ENCODE measurements at regions of chr4 and their contacts with region 1.

Region 1: DNA sequence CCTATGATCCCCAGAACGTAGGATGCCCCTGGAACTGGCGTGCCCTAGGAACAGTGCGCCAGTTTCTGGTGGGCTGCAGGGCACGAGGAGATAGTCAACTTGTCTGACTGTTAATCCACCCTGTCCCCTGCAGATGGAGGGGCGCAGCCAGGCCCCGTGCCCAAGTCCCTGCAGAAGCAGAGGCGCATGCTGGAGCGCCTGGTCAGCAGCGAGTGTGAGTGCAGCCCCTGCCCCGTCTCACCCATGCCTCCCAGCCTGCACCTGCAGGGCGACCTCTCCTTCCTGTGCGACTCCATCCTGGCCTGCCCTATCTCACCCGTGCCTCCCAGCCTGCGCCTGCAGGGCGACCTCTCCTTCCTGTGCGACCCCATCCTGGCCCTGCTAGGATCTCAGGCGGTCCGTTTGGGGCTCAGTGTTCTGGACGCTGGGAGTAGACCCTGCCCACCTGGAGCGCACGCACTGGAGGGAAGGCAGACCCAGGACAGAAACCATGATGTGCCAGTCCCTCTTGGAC is 22.2 kb downstream of the WFS1 start:
- DNase-seq: no peak
- ATAC-seq: no peak

Region 2: DNA sequence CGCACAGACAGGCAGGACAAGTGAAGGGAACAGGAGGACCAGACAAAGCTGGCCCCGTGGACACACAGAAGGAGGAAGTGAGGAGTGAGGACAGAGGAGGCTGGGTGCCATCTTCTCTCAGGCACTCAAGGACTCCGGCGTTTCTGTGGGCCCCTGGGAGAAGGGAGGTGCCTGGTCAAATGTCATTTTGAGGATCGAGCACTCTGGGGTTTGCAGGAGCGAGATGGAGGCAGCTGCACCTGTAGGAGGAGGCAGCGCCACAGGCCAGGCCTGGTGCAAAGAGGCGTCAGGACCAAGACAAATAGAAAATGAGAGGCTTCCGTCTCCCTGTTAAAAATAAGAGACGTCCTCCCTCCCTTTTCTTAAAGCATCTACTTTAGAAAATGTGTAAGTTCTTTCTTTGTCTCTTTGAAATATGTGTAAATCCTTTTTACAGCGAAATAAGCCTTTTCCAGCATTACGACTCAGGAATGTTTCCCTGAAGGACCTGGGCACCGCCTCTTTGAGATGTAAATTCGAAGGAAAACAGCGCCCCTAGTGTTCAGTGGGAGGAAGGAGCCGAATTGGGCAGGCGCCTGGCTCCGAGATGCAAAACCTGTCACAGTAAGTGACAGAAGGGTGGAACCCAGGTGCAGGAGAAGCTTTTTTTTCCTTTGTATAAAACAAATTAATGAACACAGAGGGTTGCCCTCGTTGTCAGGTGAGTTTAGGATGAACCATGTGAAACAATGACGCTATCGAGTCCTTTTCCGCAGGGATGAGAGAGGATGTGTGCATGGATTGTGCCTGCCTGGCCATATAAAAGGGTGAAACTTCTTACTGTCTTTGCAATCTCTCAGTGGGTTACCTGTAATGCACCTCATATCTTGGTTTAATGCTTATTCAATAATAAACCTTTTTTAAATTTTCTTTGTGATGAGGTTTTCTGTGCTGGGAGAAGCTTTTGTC is 272.3 kb before region 1 on chr4:
- intact Hi-C with region 1: no loop called
- DNase-seq: no peak
- ATAC-seq: peak in 1 of 2 donors; percentile 49

Region 3: GRCh38 chr4:6232836-6233785 is 58.7 kb before region 1 on chr4:
- intact Hi-C with region 1: loop called in 1 of 2 experiments (anchors 2 kb)
- DNase-seq: no peak
- ATAC-seq: no peak

Region 4: DNA sequence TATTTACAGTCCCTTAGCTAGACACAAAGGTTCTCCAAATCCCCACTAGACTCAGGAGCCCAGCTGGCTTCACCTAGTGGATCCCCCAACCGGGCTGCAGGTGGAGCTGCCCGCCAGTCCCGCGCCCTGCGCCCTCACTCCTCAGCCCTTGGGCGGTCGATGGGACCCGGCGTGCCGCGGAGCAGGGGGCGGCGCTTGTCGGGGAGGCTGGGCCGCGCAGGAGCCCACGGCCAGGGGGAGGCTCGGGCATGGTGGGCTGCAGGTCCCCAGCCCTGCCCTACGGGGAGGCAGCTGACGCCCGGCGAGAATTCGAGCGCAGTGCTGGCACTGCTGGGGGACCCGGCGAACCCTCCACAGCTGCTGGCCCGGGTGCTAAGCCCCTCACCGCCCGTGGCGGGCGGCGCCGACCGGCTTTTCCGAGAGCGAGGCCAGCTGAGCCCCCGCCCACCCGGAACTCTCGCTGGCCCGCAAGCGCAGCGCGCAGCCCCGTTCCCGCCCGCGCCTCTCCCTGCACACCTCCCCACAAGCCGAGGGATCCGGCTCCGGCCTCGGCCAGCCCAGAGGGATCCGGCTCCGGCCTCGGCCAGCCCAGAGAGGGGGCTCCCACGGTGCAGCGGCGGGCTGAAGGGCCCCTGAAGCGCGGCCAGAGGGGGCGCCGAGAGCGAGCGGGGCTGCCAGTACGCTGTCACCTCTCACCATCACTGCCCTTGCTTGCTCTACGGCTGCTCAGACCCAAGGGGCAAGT is 17.2 kb after region 1 on chr4:
- intact Hi-C with region 1: no loop called
- DNase-seq: peak; percentile 55
- ATAC-seq: peak; percentile 79 to 90